AG04450 (cell line): ENCODE measurements at regions of chr1 and their contacts with region 1.

Region 1: DNA sequence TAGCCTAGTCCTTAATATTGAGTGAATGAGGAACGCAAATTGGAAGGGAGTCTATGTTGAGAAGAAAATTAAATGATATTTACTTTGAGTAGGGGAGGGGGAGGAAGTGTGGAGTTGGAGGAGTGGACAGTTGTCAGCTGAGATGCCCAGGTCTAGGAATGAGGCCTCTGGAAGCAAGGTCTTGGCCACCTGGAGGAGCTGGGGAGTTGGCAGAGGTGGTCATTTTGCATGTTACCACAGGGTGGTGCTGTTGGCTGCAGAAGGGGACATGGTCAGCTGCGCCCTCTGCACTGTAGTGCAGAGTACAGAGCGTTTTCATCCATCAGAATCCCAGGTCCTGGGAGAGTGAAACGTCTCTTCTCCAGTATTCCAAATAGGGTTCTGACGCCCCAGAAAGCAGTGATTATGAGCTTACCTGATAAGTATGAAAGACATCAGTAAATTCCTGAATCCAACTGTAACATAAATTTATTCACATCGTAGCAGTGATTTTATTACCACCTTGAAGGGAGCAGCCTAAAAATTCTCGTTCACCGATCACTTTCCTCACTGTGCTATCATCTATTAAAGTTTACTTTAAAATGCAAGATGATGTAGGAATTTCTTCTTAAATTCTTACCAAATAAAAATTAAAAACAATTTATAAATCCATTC is 13.8 kb downstream of the PARK7 start:
- DNase-seq: peak; percentile 48
- H3K4me3 ChIP-seq: no peak overlapping the region
- H3K27ac ChIP-seq: no peak overlapping the region
- H3K27me3 ChIP-seq: no peaks in the 10 kb centered on the region
- CTCF ChIP-seq: peak; percentile 90

Region 2: GRCh38 chr1:7962016-7962335 is 13.4 kb before region 1 on chr1:
- CTCF ChIA-PET with region 1: interaction called, 15 read pairs
- POLR2A ChIA-PET with region 1: interaction called, 9 read pairs
- DNase-seq: no peak
- H3K4me3 ChIP-seq: peak overlapping the region; percentile 83
- H3K27ac ChIP-seq: peak overlapping the region; percentile 78
- H3K27me3 ChIP-seq: no peaks in the 10 kb centered on the region
- CTCF ChIP-seq: no peak

Region 3: DNA sequence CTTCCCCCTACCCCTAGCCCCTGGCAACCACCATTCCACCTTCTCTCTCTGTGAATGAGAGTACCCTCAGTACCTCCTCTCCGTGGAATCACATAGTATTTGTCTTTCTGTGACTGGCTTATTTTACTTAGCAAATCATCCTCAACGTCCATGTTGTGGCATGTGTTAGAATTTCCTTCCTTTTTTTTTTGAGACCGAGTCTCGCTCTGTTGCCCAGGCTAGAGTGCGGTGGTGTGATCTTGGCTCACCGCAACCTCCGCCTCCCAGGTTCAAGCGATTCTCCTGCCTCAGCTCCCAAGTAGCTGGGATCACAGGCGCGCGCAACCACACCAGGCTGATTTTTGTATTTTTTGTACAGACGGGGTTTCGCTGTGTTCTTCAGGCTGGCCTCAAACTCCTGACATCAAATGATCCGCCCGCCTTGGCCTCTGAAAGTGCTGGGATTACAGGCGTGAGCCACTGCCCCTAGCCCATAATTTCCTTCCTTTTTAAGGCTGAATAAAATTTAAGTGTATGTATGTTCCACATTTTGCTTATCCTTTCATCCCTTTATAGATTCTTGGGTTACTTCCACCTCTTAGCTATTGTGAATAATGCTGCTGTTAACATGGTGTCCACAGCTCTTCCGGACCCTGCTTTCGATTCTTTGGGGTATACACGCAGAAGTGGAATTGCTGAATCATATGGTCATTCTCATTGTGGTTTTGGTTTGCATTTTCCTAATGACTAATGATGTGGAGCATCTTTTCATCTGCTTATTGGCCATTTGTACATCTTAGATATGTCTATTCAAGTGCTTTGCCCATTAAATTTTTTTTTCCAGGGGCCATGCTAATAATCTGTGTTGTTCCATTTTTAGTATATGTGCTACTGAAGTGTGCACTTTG is 18.5 kb after region 1 on chr1:
- CTCF ChIA-PET with region 1: interaction called, 10 read pairs
- POLR2A ChIA-PET with region 1: no interaction called
- DNase-seq: peak; percentile 71
- H3K4me3 ChIP-seq: no peak overlapping the region
- H3K27ac ChIP-seq: peak overlapping the region; percentile 84
- H3K27me3 ChIP-seq: no peaks in the 10 kb centered on the region
- CTCF ChIP-seq: no peak

Region 4: DNA sequence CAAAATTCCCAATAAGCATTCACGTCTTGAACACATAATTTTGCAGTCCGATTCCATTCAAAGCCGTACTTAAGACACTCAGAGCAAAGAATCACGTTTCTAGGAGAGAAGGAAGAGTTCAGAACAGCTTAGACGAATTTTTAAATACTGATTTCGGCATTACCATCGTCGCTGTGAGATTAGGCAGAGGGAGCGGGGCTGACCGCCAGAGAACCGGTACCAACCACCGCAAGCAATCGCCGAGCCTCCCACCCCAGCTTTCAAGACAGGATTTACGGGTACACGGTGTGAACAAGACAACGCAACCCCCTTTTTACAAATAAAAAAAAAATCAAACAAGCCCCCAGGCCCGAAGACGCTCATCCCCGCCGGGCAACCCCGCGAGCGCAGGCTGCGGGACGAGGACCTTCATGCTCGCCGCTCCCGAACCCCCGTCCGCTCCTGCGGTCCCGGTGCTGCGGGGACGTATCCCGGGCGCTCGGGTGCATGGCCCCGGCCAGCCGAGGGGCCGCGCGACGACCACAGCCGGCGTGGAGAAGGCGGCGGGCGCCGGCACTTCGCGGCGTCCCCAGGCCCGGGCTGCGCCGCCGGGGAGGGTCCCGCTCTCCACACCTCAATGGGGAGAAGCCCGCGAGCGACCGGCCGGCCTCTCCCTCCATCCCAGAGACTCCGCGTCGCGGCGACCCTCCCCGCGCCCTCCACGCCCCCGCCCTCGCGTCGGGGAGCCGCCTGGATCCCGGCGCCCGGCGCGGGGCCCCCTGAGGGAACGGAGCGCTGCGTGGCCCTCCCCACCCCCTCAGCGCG is 50.2 kb after region 1 on chr1:
- CTCF ChIA-PET with region 1: interaction called, 12 read pairs
- POLR2A ChIA-PET with region 1: no interaction called
- DNase-seq: no peak
- H3K4me3 ChIP-seq: peak overlapping the region; percentile 80
- H3K27ac ChIP-seq: peak overlapping the region; percentile 11
- H3K27me3 ChIP-seq: no peaks in the 10 kb centered on the region
- CTCF ChIP-seq: no peak

Region 5: DNA sequence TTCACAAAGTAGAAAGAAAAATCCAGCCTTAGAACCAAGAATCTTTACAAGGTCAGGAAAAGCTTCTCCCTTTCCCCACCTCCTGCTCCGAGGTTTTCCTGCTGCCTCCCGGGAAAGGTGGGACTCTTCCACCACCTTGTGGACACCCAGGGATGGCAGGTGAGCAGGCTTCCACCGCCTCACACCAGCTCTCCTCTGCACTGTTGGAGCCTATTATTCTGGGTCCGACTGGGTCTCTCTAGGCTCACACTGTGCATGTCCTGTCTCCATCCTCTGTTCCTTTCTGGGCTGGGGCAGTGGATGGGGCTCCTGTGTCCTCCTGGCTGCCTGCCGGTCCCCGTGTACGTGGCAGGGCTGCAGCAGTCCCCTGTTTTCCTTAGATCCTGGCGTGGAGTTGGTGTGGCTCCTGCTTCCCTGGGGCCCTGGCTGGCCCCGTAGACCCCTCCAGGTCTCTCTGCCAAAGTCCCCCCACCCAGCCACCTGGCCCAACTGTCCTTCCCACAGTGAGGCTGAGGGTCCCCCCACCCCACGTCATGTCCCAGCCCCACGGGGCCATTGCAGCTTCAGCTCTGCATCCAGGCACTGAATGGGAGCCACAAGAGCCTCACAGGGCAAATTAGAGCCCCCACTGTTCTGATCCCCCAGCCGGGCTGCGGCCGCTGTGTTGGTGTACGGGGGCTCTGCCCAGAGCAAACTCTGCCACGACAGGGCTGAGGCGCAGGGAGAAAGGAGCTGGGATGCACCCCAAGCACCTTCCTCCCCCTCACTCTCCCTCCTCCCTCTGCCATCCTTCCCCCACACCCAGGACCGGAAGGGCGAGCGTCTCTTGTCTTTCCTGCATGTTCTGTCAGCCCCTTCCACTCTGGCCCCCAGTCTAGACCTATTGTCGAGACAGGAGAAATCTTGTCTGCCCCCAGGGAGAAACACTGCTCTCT is 339.3 kb after region 1 on chr1:
- CTCF ChIA-PET with region 1: interaction called, 53 read pairs
- POLR2A ChIA-PET with region 1: no interaction called
- DNase-seq: peak; percentile 52
- H3K4me3 ChIP-seq: no peak overlapping the region
- H3K27ac ChIP-seq: no peak overlapping the region
- H3K27me3 ChIP-seq: no peaks in the 10 kb centered on the region
- CTCF ChIP-seq: peak; percentile 96

Region 6: DNA sequence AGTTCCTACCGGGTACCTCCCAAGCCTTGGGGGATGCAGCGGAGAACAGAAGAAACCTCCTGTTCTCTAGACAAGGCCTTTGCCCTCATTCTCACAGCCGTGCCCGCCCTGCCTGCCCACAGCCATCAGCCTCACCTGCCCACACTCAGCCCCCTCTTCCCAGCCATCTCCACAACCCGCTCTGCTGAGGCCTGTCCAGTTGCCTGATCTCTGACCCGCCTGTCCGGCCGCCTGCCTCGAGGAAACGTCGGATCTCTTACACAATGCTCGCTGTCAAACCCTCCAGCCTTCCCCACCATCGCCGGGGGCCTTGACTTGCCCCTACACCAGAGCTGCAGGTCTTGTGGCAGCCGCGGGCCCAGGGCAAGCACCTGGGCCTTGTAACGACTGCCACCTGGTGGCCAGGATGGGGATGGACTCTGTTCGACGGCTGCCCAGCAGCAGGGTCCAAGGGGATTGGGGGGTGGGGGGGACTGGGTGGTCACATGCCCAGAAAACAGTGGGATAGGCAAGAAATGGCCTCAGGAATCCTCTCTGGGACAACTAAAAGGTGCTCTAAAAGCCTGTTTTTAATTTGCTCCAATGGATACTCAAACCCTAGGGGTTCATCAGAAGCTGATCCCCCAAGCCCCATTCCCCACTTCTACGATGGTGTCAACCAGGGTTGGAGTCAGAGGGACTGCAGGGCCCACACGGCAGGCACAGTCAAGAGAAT is 373.6 kb after region 1 on chr1:
- CTCF ChIA-PET with region 1: interaction called, 75 read pairs
- POLR2A ChIA-PET with region 1: no interaction called
- DNase-seq: peak; percentile 23
- H3K4me3 ChIP-seq: no peak overlapping the region
- H3K27ac ChIP-seq: no peak overlapping the region
- H3K27me3 ChIP-seq: no peaks in the 10 kb centered on the region
- CTCF ChIP-seq: peak; percentile 82

Region 7: DNA sequence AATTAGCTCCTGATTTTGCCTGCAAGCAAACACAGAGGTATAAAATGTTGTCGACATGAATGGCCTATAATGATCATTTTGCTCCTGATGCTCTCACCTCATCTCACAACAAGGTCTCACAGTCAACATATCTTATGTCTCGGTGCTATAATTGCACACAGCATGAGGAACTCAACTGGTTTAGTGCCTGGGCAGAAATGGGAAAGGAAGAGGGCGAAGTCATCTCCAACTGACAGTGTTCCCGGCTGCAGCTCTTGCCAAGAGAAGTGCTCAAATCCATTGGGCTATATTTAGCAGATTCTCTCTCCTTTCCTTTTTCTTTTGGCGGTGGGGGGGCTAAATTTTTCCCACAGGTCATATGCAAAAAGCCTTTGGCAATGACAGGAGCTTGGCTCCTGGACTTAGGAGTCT is 395.6 kb after region 1 on chr1:
- CTCF ChIA-PET with region 1: interaction called, 12 read pairs
- POLR2A ChIA-PET with region 1: no interaction called
- DNase-seq: no peak
- H3K4me3 ChIP-seq: no peak overlapping the region
- H3K27ac ChIP-seq: peak overlapping the region; percentile 11
- H3K27me3 ChIP-seq: no peaks in the 10 kb centered on the region
- CTCF ChIP-seq: no peak